PC-3 (cell line): ENCODE measurements at regions of chr1 and their contacts with region 1.

Region 1: DNA sequence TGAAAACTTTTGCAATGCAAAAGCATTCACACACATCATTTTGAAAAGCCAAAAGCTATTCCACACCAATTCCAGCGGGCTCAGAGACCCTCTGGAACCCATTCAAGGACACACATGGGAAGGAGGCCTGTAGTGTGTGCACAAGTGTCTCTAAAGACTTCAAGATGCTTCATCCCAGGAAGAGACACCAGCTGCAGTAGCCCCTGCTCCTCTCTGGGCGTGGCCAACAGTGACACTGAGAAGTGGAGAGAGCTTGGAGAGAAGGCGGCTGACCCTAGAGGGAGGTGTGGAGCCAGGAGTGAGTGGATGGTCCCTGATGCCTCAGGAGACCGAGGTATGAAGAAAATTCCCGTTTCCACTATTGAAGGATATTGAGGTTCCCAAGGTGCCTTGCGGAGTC is 14.9 kb upstream of the TNNI1 start:
- DNase-seq: peak; percentile 81
- ATAC-seq: peak; percentile 57
- H3K4me3 ChIP-seq: no peak overlapping the region
- H3K27ac ChIP-seq: peak overlapping the region; percentile 47
- H3K4me1 ChIP-seq: peaks cover 21% of the 10 kb centered on the region
- H3K27me3 ChIP-seq: no peaks in the 10 kb centered on the region
- CTCF ChIP-seq: peak; percentile 79

Region 2: DNA sequence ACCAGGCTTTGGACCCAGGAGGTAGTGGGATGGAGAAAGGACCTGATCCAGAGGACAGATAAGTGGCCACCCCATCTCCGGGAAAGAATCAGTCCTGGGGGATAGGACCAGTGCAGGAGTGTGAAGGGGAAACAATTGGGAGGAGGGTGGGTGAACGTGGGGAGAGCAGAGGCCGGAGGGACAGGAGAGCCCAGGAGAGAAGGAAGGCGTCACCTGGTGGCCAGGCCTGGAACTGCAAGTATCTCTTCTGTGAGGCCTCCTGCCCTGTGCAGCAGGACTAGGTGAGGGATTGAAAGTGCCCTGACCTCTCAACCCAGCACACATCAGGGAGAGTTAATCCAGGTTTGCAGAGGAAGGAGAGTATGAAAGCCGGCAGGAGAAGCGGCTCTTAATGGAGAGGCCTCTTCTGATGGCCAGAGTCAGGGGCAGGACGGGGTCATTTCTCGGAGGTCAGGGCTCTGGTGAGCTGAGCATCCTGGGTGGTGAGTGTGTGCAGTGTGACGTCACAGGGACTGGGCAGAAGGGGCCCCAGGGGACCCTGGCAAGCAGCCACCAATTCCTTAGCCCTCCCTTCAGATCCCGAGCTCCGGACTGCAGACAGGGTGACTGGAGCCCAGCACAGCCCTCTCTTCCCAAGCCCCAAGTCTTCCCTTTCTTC is 28.1 kb before region 1 on chr1:
- CTCF ChIA-PET with region 1: interaction called, 14 read pairs
- POLR2A ChIA-PET with region 1: no interaction called
- intact Hi-C with region 1: no loop called
- DNase-seq: peak; percentile 99
- ATAC-seq: peak; percentile 89
- H3K4me3 ChIP-seq: no peak overlapping the region
- H3K27ac ChIP-seq: no peak overlapping the region
- H3K4me1 ChIP-seq: peaks cover 10% of the 10 kb centered on the region; the same call in 1 of the 2 replicates
- H3K27me3 ChIP-seq: no peaks in the 10 kb centered on the region
- CTCF ChIP-seq: peak; percentile 100

Region 3: DNA sequence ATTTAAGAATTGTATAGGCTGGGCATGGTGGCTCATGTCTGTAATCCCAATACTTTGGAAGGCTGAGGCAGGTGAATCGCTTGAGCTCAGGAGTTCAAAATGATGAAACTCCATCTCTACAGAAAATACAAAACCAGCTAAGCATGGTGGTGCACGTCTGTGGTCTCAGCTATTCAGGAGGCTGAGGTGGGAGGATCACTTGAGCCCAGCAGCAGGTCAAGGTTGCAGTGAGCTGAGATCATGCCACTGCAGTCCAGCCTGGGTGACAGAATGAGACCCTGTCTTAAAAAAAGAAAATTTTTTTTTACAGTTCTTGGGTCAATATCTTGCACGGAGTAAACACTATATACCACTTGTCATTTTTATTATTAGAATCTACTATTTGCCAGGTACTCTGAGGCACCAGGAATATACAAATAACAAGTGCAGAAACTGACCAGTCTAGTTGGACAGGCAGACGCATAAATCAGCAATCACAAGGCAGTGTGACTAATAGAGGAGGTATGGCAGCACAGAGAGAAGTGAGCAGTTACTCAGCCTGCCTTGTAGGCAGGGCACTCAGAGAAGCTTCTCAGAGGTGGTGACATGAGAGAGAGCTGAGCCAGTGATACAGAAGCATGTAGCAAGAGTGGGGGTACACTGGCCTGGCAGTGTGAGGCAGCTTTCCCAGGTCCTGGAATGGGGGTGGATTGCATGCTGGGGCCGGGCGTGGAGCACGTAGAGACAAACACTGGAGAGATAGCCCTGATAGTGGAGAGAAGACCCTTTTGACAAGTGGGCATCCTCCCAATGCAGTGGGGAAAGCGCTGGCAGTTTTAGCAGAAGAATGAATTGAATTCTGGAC is 24.6 kb after region 1 on chr1:
- CTCF ChIA-PET with region 1: interaction called, 31 read pairs
- POLR2A ChIA-PET with region 1: interaction called, 3 read pairs
- intact Hi-C with region 1: loop called (anchors 1 kb)
- DNase-seq: peak; percentile 100
- ATAC-seq: peak; percentile 86
- H3K4me3 ChIP-seq: peak overlapping the region; percentile 37
- H3K27ac ChIP-seq: peak overlapping the region; percentile 84
- H3K4me1 ChIP-seq: peaks cover 71% of the 10 kb centered on the region
- H3K27me3 ChIP-seq: no peaks in the 10 kb centered on the region
- CTCF ChIP-seq: no peak

Region 4: DNA sequence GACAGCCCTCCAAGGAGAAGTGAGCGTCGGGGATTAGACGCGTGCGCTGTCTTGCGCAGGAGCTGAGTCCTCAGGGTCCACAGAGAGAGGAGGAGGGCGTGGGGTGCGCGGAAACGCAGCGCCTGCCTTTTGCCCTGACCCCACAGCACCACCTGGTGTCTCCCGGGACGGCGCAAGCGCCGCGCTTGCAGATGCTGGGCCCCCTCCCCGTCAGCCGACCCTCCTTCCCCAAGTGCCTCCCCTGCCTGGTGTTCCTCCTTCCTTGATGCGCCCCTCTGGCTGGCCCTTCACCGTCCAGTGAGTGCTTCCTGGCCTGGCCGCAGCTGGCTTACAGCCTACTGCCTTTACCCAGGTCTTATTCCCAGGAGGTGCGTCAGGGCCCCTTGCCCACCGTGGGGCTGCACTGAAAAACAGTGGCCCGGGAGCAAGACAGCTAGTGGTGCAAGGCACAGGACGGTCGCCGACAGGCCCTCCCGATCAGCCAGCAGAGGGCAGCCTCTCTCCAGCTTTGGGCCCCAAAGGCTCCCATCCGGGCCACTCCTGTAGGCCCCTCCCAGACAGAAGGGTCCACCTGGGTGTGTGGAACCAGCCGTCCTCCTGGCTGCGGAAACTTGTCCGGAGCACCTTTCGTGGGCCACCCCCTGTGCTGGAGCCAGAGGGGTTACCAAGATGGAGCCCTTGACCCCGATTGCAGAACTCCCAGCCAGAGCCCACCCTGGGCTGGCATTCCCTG is 45.5 kb after region 1 on chr1:
- CTCF ChIA-PET with region 1: interaction called, 30 read pairs
- POLR2A ChIA-PET with region 1: interaction called, 3 read pairs
- intact Hi-C with region 1: loop called (anchors 1 kb)
- DNase-seq: peak; percentile 76
- ATAC-seq: peak; percentile 68
- H3K4me3 ChIP-seq: no peak overlapping the region
- H3K27ac ChIP-seq: no peak overlapping the region
- H3K4me1 ChIP-seq: peaks cover 17% of the 10 kb centered on the region
- H3K27me3 ChIP-seq: no peaks in the 10 kb centered on the region
- CTCF ChIP-seq: peak; percentile 85